Panc1 (cell line): ENCODE measurements at regions of chr4 and their contacts with region 1.

Region 1: GRCh38 chr4:172830295-172830764 is 338.3 kb upstream of the GALNT7 start:
- DNase-seq: no peak
- ATAC-seq: no peak
- H3K4me3 ChIP-seq: no peak overlapping the region
- H3K27ac ChIP-seq: no peak overlapping the region
- H3K4me1 ChIP-seq: no peaks in the 10 kb centered on the region
- H3K27me3 ChIP-seq: no peaks in the 10 kb centered on the region
- CTCF ChIP-seq: peak; percentile 50; the same call in 1 of the 2 replicates

Region 2: GRCh38 chr4:171846232-171846631 is 984.1 kb before region 1 on chr4:
- CTCF ChIA-PET with region 1: no interaction called
- POLR2A ChIA-PET with region 1: no interaction called
- in situ Hi-C with region 1: no loop called
- intact Hi-C with region 1: loop called (anchors 10 kb)
- DNase-seq: peak; percentile 5
- ATAC-seq: no peak
- H3K4me3 ChIP-seq: no peak overlapping the region
- H3K27ac ChIP-seq: no peak overlapping the region
- H3K4me1 ChIP-seq: no peaks in the 10 kb centered on the region
- H3K27me3 ChIP-seq: no peaks in the 10 kb centered on the region
- CTCF ChIP-seq: peak; percentile 44

Region 3: DNA sequence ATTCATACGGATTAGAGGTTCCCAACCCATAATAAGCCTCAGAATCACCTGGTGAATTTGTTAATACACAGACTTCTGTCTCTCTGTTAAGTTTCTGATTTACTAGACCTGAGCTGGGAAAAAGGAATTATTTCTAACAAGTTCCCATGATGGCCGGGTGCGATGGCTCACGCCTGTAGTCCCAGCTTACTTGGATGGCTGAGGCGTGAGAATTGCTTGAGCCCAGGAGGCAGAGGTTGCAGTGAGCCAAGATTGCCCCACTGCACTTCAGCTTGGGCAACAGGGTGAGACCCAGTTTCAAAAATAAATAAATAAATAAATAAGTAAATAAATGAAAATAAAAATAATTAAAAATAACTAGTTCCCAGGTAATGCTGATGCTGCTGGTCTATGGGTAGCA is 604.9 kb before region 1 on chr4:
- CTCF ChIA-PET with region 1: no interaction called
- POLR2A ChIA-PET with region 1: no interaction called
- in situ Hi-C with region 1: no loop called
- intact Hi-C with region 1: loop called (anchors 10 kb)
- DNase-seq: no peak
- ATAC-seq: no peak
- H3K4me3 ChIP-seq: no peak overlapping the region
- H3K27ac ChIP-seq: no peak overlapping the region
- H3K4me1 ChIP-seq: no peaks in the 10 kb centered on the region
- H3K27me3 ChIP-seq: no peaks in the 10 kb centered on the region
- CTCF ChIP-seq: no peak

Region 4: DNA sequence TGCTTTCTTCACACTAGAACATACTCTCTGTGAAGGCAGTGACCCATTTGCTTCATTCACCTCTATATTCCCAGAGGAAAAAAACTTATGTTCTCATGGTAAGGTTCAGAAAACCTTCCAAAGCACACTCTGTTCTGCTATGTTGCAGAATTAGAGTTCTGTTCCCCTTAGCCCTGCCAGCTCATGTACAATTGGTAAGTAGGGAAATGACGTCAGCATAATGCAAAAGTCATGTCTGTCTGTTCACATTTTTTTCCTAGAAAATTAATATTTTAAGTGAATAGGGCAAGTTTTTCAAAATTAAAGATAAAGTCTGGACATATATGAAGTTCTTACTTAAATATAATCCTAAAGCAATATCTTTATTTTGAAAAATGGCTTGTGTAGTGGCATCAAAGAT is 573.5 kb before region 1 on chr4:
- CTCF ChIA-PET with region 1: no interaction called
- POLR2A ChIA-PET with region 1: no interaction called
- in situ Hi-C with region 1: no loop called
- intact Hi-C with region 1: no loop called
- DNase-seq: no peak
- ATAC-seq: no peak
- H3K4me3 ChIP-seq: no peak overlapping the region
- H3K27ac ChIP-seq: no peak overlapping the region
- H3K4me1 ChIP-seq: no peaks in the 10 kb centered on the region
- H3K27me3 ChIP-seq: no peaks in the 10 kb centered on the region
- CTCF ChIP-seq: no peak

Region 5: GRCh38 chr4:172845281-172845680 is 15.0 kb after region 1 on chr4:
- CTCF ChIA-PET with region 1: interaction called, 13 read pairs
- POLR2A ChIA-PET with region 1: no interaction called
- in situ Hi-C with region 1: no loop called
- intact Hi-C with region 1: no loop called
- DNase-seq: no peak
- ATAC-seq: no peak
- H3K4me3 ChIP-seq: no peak overlapping the region
- H3K27ac ChIP-seq: no peak overlapping the region
- H3K4me1 ChIP-seq: no peaks in the 10 kb centered on the region
- H3K27me3 ChIP-seq: no peaks in the 10 kb centered on the region
- CTCF ChIP-seq: no peak